Activated CD8-positive, alpha-beta T cell treated with anti-CD3 and anti-CD28 coated beads for 36 hours (primary cell): ENCODE measurements at regions of chr1 and their contacts with region 1.

Region 1: GRCh38 chr1:17125756-17126237 is 6.5 kb upstream of the PADI2 start:
- DNase-seq: peak; percentile 89
- ATAC-seq: peak; percentile 87
- H3K4me3 Mint-ChIP-seq: no peak overlapping the region
- H3K27ac Mint-ChIP-seq: no peak overlapping the region
- H3K4me1 Mint-ChIP-seq: no peaks in the 10 kb centered on the region
- H3K27me3 Mint-ChIP-seq: peaks cover 16% of the 10 kb centered on the region
- CTCF ChIP-seq: peak; percentile 86

Region 2: GRCh38 chr1:17075470-17076255 is 50.1 kb before region 1 on chr1:
- CTCF ChIA-PET with region 1: no interaction called
- POLR2A ChIA-PET with region 1: no interaction called
- intact Hi-C with region 1: no loop called
- DNase-seq: peak; percentile 37
- ATAC-seq: no peak
- H3K4me3 Mint-ChIP-seq: no peak overlapping the region
- H3K27ac Mint-ChIP-seq: no peak overlapping the region
- H3K4me1 Mint-ChIP-seq: no peaks in the 10 kb centered on the region
- H3K27me3 Mint-ChIP-seq: no peaks in the 10 kb centered on the region
- CTCF ChIP-seq: peak; percentile 29

Region 3: GRCh38 chr1:17207966-17208418 is 82.2 kb after region 1 on chr1:
- CTCF ChIA-PET with region 1: interaction called, 13 read pairs
- POLR2A ChIA-PET with region 1: no interaction called
- intact Hi-C with region 1: no loop called
- DNase-seq: peak; percentile 89
- ATAC-seq: peak; percentile 96
- H3K4me3 Mint-ChIP-seq: no peak overlapping the region
- H3K27ac Mint-ChIP-seq: peak overlapping the region; percentile 58
- H3K4me1 Mint-ChIP-seq: peaks cover 36% of the 10 kb centered on the region
- H3K27me3 Mint-ChIP-seq: peaks cover 53% of the 10 kb centered on the region
- CTCF ChIP-seq: no peak

Region 4: DNA sequence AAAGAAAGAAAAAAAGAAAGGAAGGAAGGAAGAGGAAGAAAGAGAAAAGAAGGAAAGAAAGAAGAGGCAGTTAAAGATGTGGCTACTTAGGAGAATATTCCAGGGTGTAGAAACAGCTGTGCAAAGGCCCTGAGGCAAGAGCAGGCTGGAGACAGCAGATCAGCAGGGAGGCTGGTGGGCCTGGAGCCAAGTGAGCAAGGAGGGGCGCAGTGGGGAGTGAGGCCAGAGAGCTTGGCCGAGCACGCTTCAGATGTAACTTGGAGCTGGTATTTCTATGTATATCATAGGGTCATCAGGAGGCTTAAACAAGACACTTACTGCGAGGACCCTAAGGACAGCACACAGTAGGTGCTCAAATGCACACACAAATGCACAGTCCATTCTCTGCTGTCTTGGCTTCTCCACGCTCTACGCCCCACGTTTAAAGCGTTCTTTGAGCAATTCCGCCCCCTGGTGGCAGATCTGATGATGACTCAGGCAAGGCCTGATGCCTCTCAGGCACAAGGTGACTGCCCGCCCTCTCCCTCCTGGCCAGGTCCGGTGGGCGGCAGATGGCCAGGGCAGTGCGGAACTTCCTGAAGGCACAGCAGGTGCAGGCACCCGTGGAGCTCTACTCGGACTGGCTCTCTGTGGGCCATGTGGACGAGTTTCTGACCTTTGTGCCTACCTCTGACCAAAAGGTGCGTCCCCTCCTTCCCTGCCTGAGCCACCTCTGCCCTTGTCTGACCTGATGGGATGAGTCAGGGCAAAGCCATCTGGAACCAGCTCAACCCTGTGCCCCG is 111.2 kb after region 1 on chr1:
- CTCF ChIA-PET with region 1: interaction called, 163 read pairs
- POLR2A ChIA-PET with region 1: interaction called, 6 read pairs
- intact Hi-C with region 1: loop called (anchors 1 kb)
- DNase-seq: peak; percentile 94
- ATAC-seq: peak; percentile 87
- H3K4me3 Mint-ChIP-seq: no peak overlapping the region
- H3K27ac Mint-ChIP-seq: no peak overlapping the region
- H3K4me1 Mint-ChIP-seq: no peaks in the 10 kb centered on the region
- H3K27me3 Mint-ChIP-seq: no peaks in the 10 kb centered on the region
- CTCF ChIP-seq: peak; percentile 88

Region 5: DNA sequence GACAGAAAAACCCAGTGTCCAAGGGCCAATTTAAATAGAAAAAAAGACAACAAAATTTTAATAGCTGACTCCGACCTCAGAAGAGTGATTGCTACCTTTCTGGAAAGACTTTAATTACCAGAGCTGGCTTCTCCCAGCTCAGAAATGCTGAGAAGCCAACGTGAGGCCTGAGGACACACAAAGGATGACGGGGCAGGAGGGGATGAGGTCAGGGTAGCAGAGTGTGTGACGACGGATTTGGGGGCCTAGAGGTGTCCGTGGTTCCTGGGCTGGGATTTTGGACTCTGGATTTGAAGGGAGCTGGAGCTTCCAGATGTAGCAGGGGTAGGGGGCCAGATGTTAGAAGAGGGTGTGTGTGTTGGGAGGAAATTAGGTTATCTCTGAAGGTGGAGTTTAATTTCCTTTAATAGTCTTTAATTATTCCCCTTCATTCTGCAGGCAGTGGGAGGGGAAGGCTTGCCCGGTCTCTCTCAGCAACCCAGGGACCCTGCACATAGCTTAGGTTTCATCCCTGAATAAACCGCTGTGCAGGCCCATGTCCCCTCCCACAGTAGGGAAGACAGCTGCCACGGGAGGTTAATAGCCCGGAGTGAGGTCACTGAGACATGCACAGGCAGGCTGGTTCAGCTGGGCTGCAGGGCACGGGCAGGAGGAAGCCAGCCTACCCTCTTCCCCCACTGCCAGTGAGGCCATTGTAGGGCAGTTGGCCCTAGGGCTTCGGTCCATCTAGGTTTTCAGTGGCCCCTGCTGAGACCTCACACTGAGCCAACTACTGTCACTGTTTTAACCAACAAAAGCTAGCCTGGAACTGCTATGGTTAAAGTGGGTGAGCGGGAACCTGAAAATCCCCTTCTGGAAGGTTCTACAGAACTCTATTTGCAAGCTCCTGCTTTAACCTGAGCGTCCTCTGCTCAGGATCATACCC is 119.3 kb after region 1 on chr1:
- CTCF ChIA-PET with region 1: interaction called, 30 read pairs
- POLR2A ChIA-PET with region 1: no interaction called
- intact Hi-C with region 1: no loop called
- DNase-seq: no peak
- ATAC-seq: no peak
- H3K4me3 Mint-ChIP-seq: no peak overlapping the region
- H3K27ac Mint-ChIP-seq: no peak overlapping the region
- H3K4me1 Mint-ChIP-seq: no peaks in the 10 kb centered on the region
- H3K27me3 Mint-ChIP-seq: no peaks in the 10 kb centered on the region
- CTCF ChIP-seq: no peak